CD8-positive, alpha-beta memory T cell (primary cell): ENCODE measurements at regions of chr9 and their contacts with region 1.

Region 1: DNA sequence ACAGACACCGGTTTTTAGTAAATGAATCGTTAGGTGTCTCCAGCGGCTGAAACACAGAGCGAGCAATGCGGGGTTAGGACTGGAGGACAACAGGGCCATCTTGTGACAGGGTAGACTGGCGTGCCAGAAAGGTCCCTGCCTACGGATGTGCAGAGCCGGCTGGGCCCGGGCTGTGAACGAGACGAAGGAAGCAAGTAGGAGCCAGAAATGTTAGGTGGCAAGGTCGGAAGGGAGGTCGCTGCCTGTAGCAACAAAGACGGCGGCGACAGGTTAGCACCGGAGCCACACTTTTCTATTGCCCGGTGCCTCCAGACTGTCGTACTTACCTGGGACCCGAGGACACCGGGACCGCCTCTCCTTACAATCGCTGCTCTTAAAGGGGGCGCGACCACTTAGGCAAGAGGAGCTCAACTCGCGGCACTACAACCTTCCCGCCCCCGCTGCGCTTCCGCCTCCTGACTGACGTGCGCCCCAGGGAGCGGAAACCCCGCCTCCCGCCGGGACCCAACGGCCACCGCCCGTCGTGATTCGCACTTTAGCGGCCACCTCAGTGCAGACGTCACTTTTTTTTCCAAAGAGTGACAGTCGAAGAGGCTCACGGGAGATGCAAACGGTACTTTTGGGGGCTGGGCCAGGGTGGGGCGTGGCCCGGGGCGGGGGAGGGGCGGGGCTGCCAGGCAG is at the start of gene INIP:
- DNase-seq: peak; percentile 97 to 99 (median 98)
- H3K4me3 ChIP-seq: peak within 1 kb of the TSS; percentile 91
- H3K4me3 Mint-ChIP-seq: peak within 1 kb of the TSS; percentile 89 to 98 (median 95)
- H3K27ac ChIP-seq: peak within 1 kb of the TSS; percentile 99
- H3K27ac Mint-ChIP-seq: peak within 1 kb of the TSS; percentile 91 to 100 (median 98)
- H3K4me1 ChIP-seq: peaks cover 13% of the 10 kb centered on the region
- H3K4me1 Mint-ChIP-seq: peaks cover 23 to 40% (median 29%) of the 10 kb centered on the region in 3 donors
- H3K27me3 ChIP-seq: no peaks in the 10 kb centered on the region
- H3K27me3 Mint-ChIP-seq: no peaks in the 10 kb centered on the region
- total RNA-seq, gene INIP: 40.2 to 44.9 TPM

Region 2: DNA sequence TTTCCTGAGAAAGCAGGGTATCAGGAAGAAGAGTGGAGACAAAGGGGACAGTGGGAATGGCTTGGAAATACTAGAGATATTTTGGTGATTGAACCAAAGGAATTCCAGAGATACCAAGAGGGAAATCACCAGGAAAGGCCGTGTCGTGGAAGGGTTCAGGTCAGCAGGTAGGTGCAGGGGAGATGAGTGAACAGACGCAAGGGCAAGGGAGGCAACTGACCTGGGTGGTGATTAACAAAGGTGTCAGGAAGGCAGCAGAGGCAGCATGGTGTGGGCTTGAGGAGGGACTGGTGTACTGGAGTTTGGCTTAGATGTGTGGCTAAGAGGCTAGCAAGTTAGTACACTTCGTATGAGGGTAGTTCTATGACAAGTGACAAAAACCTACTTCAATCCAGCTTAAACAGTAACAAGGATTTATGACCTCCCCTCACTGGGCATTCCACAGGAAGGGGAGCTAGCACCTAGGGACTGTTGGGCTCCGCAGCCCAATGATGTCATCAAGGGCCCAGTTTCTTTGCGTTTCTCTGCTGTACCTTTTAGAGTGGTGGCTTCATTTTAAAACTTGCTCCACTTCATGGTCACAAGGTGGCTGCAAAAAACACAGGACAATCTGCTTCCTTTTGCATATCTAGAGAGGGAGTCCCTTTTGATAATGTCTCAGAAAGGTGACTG is 36.9 kb before region 1 on chr9:
- CTCF ChIA-PET with region 1: no interaction called
- POLR2A ChIA-PET with region 1: no interaction called
- DNase-seq: no peak
- H3K4me3 ChIP-seq: no peak overlapping the region
- H3K4me3 Mint-ChIP-seq: no peak overlapping the region
- H3K27ac ChIP-seq: no peak overlapping the region
- H3K27ac Mint-ChIP-seq: peak overlapping the region in 1 of 8 donors; percentile 48
- H3K4me1 ChIP-seq: no peaks in the 10 kb centered on the region
- H3K4me1 Mint-ChIP-seq: peaks cover 0 to 7% (median 3%) of the 10 kb centered on the region in 3 donors
- H3K27me3 ChIP-seq: no peaks in the 10 kb centered on the region
- H3K27me3 Mint-ChIP-seq: peaks cover 4 to 7% of the 10 kb centered on the region in 2 donors

Region 3: DNA sequence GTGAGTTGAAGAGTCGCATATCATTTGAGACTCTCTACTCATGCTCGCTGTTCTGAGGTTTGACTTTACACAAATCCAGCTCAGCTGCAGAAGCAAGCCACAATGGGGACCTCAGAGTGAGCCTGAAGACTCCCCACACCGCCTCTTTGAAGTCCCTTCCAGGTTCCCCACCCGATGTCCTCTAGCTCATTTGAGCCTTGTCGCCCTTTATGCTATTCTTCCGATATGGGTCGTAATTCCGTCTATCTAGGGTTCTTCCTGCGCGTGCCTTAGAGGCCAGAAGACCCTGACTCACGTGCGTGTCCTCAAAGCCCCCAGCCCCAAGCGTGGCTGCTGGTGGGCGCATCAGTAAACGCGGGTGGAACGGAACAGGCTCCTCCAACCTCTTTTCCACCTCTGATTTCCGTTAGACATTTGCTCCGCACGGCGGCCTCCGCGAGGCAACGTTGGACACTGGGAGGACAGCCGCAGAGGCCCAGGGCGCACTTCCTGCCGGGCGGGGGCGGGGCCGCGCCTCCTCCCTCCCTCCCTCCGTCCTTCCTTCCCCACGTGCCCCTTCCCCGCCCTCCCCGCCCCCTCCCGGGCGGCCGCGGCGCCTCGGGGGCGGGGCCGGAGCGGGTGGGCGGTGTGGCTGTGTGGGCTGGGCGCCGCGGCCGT is 32.4 kb after region 1 on chr9 and contains the start of gene SNX30:
- CTCF ChIA-PET with region 1: interaction called, 16 read pairs
- POLR2A ChIA-PET with region 1: interaction called, 16 read pairs
- DNase-seq: peak; percentile 72 to 85 (median 78)
- H3K4me3 ChIP-seq: peak within 1 kb of the TSS; percentile 77
- H3K4me3 Mint-ChIP-seq: peak within 1 kb of the TSS; percentile 82 to 92 (median 90)
- H3K27ac ChIP-seq: peak within 1 kb of the TSS; percentile 81
- H3K27ac Mint-ChIP-seq: peak within 1 kb of the TSS; percentile 81 to 98 (median 94)
- H3K4me1 ChIP-seq: peaks cover 50% of the 10 kb centered on the region
- H3K4me1 Mint-ChIP-seq: peaks cover 53 to 69% (median 67%) of the 10 kb centered on the region in 3 donors
- H3K27me3 ChIP-seq: no peaks in the 10 kb centered on the region
- H3K27me3 Mint-ChIP-seq: no peaks in the 10 kb centered on the region
- total RNA-seq, gene SNX30: 3.3 to 3.7 TPM

Region 4: DNA sequence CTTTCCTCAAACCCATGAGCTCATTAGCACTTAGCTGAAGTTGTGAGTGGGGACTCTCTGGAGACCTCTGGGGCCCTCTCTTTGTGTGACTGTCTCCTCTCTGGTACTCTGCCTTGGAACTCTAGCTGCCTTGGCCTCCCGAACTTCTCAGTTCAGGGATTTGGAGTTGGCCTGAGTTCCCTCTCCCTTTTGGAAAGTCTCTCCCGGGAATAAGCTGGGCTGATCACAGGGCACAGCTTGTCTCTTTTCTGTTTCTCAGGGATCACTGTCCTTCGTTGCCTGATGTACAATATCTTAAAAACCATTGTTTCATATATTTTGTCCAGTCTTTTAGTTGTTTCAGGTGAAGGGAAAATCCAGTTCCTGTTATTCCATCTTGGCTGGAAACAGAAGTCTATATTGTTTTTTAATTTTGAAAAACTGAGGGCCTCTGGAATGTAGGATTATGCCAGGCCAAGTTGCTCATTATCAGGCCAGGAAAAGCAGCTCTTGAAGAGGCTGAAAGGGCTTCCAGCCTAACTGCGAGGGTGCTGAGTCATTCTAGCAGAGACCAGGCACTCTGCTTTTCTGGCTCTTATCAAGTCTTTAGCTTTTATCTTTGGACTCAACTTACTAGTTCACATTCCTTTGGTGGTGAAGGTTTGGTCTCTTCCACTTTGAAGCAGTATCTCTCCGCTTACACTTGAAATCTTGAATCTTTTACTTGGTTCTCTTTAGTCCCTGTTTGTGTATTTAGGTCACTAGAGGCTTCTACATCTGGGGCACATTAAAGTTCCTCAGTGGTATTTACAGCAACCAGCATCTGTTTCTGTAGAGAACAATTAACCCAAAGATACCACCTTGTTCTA is 737.3 kb after region 1 on chr9:
- CTCF ChIA-PET with region 1: no interaction called
- POLR2A ChIA-PET with region 1: no interaction called
- DNase-seq: no peak
- H3K4me3 ChIP-seq: no peak overlapping the region
- H3K4me3 Mint-ChIP-seq: no peak overlapping the region
- H3K27ac ChIP-seq: no peak overlapping the region
- H3K27ac Mint-ChIP-seq: peak overlapping the region in 4 of 8 donors; percentile 35 to 96 (median 56)
- H3K4me1 ChIP-seq: no peaks in the 10 kb centered on the region
- H3K4me1 Mint-ChIP-seq: peaks cover 1 to 8% (median 8%) of the 10 kb centered on the region in 3 donors
- H3K27me3 ChIP-seq: no peaks in the 10 kb centered on the region
- H3K27me3 Mint-ChIP-seq: peaks cover 0 to 1% of the 10 kb centered on the region in 2 donors